CD14-positive monocyte (primary cell): ENCODE measurements at regions of chr1 and their contacts with region 1.

Region 1: DNA sequence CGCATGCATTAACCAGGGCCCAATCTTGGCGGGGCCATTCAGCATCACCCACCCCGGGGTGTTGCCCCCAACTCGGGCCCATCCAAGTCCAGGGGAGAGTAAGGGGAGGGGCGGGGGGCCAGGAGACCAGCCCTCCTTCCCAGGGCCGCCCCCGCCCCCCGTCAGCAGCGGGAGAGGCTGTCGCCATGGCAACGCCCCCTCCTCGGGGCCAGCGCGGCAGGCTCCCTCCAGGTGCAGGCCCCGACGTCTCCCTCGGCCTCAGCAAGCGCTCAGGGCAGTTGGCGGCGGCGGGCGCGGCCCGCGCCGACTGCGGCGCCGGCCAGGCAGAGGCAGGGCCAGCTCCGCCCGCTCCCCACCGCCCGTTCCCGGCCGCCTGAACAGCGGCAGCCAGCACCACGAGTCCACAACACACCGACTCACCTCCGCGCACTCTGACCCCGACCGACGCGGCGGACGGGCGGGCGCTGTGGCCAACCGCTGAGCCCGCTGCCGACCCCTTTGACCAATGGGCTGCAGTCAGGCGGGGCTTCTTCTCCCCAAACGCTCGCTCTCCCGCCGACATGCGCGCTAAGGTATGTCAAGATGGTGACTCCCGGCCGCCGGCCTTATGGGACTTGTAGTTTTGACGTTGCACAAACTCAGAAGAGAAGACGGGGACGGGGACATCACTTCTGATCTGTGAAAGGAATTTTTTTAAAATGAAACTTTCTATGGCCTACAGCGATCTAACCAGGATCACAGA is at the start of gene ERI3:
- DNase-seq: peak; percentile 96 to 97 (median 96)
- H3K4me3 ChIP-seq: peak within 1 kb of the TSS; percentile 52 to 90 (median 60)
- H3K4me3 Mint-ChIP-seq: peak within 1 kb of the TSS; percentile 81 to 82
- H3K27ac ChIP-seq: peak within 1 kb of the TSS; percentile 17 to 87
- H3K27ac Mint-ChIP-seq: peak within 1 kb of the TSS; percentile 62 to 93 (median 86)
- H3K4me1 ChIP-seq: peaks cover 11 to 17% of the 10 kb centered on the region in 2 donors
- H3K4me1 Mint-ChIP-seq: peaks cover 20% of the 10 kb centered on the region
- H3K27me3 ChIP-seq: no peaks in the 10 kb centered on the region
- H3K27me3 Mint-ChIP-seq: peaks cover 0 to 1% (median 0%) of the 10 kb centered on the region in 3 donors
- CTCF ChIP-seq: no peak
- polyA plus RNA-seq, gene ERI3: 26.4 to 35.0 (median 26.6) TPM

Region 2: DNA sequence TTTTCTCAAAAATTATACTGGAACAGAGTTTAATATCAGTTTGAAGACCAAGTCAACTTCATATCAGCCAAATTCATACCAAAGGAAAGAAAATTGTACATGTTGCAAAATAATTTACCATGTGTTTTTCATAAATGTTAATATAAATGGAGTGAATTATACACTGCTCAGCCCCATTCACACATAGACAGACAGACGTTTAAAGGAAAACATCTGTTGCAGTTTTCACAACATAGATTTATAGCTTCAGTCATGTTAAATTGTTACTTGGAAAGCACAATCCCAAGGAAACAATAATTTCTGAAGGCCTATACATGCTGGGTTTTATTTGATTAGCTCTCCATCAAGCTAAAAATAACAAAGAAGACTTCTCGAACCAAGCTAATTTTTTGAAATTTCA is 873.5 kb before region 1 on chr1:
- intact Hi-C with region 1: no loop called
- DNase-seq: no peak
- H3K4me3 ChIP-seq: no peak overlapping the region
- H3K4me3 Mint-ChIP-seq: no peak overlapping the region
- H3K27ac ChIP-seq: no peak overlapping the region
- H3K27ac Mint-ChIP-seq: no peak overlapping the region
- H3K4me1 ChIP-seq: no peaks in the 10 kb centered on the region
- H3K4me1 Mint-ChIP-seq: peaks cover 9% of the 10 kb centered on the region
- H3K27me3 ChIP-seq: no peaks in the 10 kb centered on the region
- H3K27me3 Mint-ChIP-seq: peaks cover 0 to 3% (median 2%) of the 10 kb centered on the region in 3 donors
- CTCF ChIP-seq: no peak

Region 3: DNA sequence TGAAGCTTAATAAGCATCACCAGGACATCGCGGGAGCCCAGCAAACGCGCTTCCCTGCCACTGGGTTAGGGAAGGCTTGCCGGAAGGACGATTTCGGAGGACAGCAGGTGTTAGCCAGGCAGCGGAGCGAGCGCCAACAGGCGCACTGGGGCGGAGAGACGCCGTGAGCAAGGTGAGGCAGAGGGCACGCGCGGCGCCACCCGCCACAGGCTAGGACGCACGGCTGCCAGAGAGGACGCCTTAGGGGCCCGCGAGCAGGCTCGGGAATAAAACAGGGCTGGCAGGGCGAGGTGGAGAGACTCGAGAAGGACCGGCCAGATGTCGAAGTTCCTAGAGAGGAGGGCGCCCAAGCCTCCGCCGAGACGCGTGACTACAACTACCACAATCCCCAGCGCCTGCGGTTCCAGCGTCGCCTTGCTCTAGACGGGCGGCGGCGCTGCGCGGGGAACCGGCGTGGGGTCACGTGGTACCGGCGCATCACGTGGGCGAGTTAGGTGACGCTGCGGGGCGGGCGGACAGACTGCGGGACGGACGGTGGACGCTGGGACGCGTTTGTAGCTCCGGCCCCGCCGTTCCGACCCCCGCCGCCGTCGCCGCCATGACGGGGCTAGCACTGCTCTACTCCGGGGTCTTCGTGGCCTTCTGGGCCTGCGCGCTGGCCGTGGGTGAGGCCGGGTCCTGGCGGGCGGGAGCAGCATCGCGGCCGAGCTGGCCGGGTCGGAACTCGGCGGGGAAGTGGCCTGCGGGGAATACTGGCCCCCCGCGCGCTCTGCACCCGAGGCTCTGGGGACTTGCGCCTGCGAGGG is 380.4 kb before region 1 on chr1 and contains the start of gene ATP6V0B:
- intact Hi-C with region 1: loop called in 1 of 2 experiments (anchors 10 kb)
- DNase-seq: peak; percentile 94 to 95 (median 94)
- H3K4me3 ChIP-seq: peak within 1 kb of the TSS; percentile 86 to 98 (median 97)
- H3K4me3 Mint-ChIP-seq: peak within 1 kb of the TSS; percentile 98 to 99
- H3K27ac ChIP-seq: peak within 1 kb of the TSS; percentile 97 to 99
- H3K27ac Mint-ChIP-seq: peak within 1 kb of the TSS; percentile 95 to 97 (median 96)
- H3K4me1 ChIP-seq: peaks cover 50 to 59% of the 10 kb centered on the region in 2 donors
- H3K4me1 Mint-ChIP-seq: peaks cover 53% of the 10 kb centered on the region
- H3K27me3 ChIP-seq: no peaks in the 10 kb centered on the region
- H3K27me3 Mint-ChIP-seq: peaks cover 2 to 8% (median 2%) of the 10 kb centered on the region in 3 donors
- CTCF ChIP-seq: peak; percentile 21
- polyA plus RNA-seq, gene ATP6V0B: 465 to 1,219 (median 954) TPM

Region 4: GRCh38 chr1:44631647-44632539 is 276.9 kb after region 1 on chr1:
- intact Hi-C with region 1: loop called in 1 of 2 experiments (anchors 1 kb)
- DNase-seq: peak; percentile 84
- H3K4me3 ChIP-seq: peak overlapping the region; percentile 68 to 97 (median 85)
- H3K4me3 Mint-ChIP-seq: peak overlapping the region; percentile 91 to 93
- H3K27ac ChIP-seq: peak overlapping the region; percentile 87 to 97
- H3K27ac Mint-ChIP-seq: peak overlapping the region; percentile 91 to 99 (median 97)
- H3K4me1 ChIP-seq: peaks cover 22 to 32% of the 10 kb centered on the region in 2 donors
- H3K4me1 Mint-ChIP-seq: peaks cover 31% of the 10 kb centered on the region
- H3K27me3 ChIP-seq: no peaks in the 10 kb centered on the region
- H3K27me3 Mint-ChIP-seq: no peaks in the 10 kb centered on the region
- CTCF ChIP-seq: no peak